ENCODE measurements at regions of chr3 and their contacts with region 1.

Region 1: DNA sequence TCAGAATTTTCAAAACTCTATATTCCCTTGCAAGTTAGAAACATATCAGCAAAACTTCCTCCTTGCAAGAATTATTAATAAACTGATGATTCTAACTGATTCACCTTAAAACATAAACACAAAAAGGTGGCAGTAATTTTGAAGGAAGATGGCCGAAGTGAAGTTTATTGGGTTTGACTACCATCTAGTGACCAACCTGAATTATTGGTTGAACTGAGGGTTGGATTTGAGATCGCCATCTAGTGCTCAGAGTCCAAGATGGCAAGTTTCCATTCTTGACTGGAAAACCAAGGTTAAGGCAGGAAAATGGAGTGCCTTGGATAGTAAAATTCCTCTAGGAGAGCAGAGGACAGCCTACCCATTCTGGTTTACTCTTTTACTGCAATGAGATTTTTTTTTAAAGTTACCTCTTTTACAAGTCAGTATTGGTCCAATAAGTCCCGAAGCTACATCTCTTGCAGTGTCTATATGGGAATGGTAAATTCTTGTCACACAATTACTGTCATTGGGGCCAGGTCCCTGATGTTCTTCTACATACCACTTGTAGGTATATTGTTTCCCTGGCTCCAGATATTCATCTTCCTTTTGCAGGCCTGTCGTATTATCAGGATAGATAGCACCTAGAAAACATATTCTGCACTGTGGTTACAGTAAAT is 51.6 kb upstream of the CP start:
- DNase-seq: peak in 1 of 2 donors; percentile 84
- ATAC-seq: peak; percentile 77 to 86 (median 81)
- H3K4me3 ChIP-seq: no peak overlapping the region
- H3K4me3 Mint-ChIP-seq: no peak overlapping the region
- H3K27ac ChIP-seq: no peak overlapping the region
- H3K27ac Mint-ChIP-seq: no peak overlapping the region
- H3K4me1 ChIP-seq: peaks cover 6% of the 10 kb centered on the region
- H3K4me1 Mint-ChIP-seq: peaks cover 14 to 22% of the 10 kb centered on the region in 2 donors
- H3K27me3 ChIP-seq: no peaks in the 10 kb centered on the region
- H3K27me3 Mint-ChIP-seq: peaks cover 0 to 3% of the 10 kb centered on the region in 2 donors
- CTCF ChIP-seq: peak; percentile 98

Region 2: DNA sequence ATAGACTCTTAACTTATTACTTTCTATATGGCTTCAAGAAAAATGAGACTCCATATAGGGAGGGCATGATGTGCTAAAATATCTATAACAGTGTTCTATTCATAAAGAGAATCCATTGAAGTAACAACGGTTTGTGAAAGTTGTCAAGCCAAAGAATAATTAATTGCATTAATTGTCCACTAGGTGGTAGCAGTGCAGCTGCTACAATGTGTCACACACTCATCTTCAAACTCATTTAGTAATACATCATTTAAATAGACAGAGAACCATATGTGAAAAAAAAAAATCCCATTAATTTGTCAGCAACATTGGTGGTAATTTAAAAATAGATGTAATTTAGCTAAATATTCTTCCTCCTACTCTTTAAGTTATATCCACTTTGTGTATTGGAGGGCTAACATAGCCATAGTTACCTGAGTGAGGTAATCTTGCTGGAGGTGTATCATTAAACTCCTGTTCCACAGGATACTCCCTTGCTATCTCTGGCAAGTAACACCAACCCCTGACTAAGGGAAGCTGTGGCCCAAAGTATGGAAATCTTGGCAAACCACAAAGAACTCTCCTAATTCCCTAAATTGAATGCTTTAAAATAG is 411.9 kb before region 1 on chr3:
- intact Hi-C with region 1: loop called (anchors 1 kb)
- DNase-seq: peak in 1 of 2 donors; percentile 60
- ATAC-seq: peak; percentile 60 to 67 (median 64)
- H3K4me3 ChIP-seq: no peak overlapping the region
- H3K4me3 Mint-ChIP-seq: no peak overlapping the region
- H3K27ac ChIP-seq: no peak overlapping the region
- H3K27ac Mint-ChIP-seq: no peak overlapping the region
- H3K4me1 ChIP-seq: no peaks in the 10 kb centered on the region
- H3K4me1 Mint-ChIP-seq: no peaks in the 10 kb centered on the region
- H3K27me3 ChIP-seq: no peaks in the 10 kb centered on the region
- H3K27me3 Mint-ChIP-seq: peaks cover 12 to 17% of the 10 kb centered on the region in 2 donors
- CTCF ChIP-seq: peak; percentile 66

Region 3: DNA sequence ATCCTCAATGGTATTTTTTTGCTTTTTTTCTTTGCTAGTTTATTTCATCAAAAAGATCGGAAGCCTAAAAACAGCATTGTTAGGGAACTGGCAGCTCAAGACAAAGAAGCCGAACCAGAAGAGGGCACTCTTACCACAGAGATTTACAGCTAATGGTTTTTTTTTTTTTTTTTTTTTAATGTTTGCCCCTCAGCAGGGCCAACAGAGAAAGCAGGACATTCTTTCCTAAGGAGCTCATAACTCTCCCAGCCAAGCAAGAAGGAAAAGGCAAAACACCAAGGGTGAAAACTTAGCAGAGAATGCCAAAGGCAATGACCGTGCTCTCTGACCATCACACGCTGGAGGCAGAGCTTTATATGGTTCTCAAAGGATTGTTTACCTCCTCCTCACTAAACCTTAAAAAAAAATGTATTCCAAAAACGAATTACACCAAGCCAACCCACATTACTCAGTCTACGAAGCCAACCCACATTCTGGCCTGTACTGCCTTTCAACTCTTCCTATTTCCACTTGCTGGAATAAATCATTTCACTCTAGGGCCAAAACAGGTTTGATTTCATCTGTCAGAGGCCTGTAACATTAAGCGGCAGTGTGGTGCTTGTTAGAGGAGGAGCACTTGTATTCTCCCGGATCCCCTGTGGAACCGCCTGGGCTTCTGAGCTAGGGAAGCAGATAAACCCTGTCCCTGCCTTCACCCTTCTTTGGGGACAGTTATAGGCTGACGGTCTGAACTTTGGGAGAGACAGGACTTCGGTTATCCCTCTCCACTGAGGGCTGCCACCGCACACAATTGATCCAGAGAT is 317.5 kb before region 1 on chr3:
- intact Hi-C with region 1: loop called (anchors 1 kb)
- DNase-seq: peak in 1 of 2 donors; percentile 67
- ATAC-seq: peak in 2 of 3 donors; percentile 64 to 65
- H3K4me3 ChIP-seq: no peak overlapping the region
- H3K4me3 Mint-ChIP-seq: no peak overlapping the region
- H3K27ac ChIP-seq: no peak overlapping the region
- H3K27ac Mint-ChIP-seq: no peak overlapping the region
- H3K4me1 ChIP-seq: no peaks in the 10 kb centered on the region
- H3K4me1 Mint-ChIP-seq: peaks cover 6% of the 10 kb centered on the region in 2 donors
- H3K27me3 ChIP-seq: no peaks in the 10 kb centered on the region
- H3K27me3 Mint-ChIP-seq: no peaks in the 10 kb centered on the region
- CTCF ChIP-seq: peak; percentile 62

Region 4: DNA sequence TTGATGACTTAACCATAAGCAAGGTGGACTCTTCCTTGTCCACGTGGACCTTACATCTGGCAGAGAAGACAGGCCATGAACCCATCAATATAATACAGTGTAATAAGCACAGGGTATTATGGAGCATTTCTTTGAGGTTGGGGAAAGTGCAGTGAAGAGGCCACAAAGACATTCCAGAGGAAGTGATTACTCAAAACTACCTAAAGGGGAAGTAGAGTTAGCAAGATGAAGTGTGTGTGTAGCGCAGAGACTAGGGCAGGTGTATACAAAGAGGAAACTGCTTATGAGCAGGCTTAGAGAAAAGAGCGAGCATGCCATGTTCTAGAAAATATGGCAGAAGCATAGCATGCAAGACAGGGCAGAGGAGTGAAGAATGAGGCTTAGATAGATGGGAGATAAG is 69.5 kb before region 1 on chr3:
- intact Hi-C with region 1: no loop called
- DNase-seq: no peak
- ATAC-seq: peak in 2 of 3 donors; percentile 22 to 69
- H3K4me3 ChIP-seq: no peak overlapping the region
- H3K4me3 Mint-ChIP-seq: no peak overlapping the region
- H3K27ac ChIP-seq: no peak overlapping the region
- H3K27ac Mint-ChIP-seq: no peak overlapping the region
- H3K4me1 ChIP-seq: no peaks in the 10 kb centered on the region
- H3K4me1 Mint-ChIP-seq: no peaks in the 10 kb centered on the region
- H3K27me3 ChIP-seq: peaks cover 4% of the 10 kb centered on the region
- H3K27me3 Mint-ChIP-seq: peaks cover 7 to 13% of the 10 kb centered on the region in 2 donors
- CTCF ChIP-seq: no peak

Region 5: GRCh38 chr3:149258298-149258697 is 14.9 kb before region 1 on chr3:
- intact Hi-C with region 1: no loop called
- DNase-seq: no peak
- ATAC-seq: no peak
- H3K4me3 ChIP-seq: no peak overlapping the region
- H3K4me3 Mint-ChIP-seq: no peak overlapping the region
- H3K27ac ChIP-seq: no peak overlapping the region
- H3K27ac Mint-ChIP-seq: no peak overlapping the region
- H3K4me1 ChIP-seq: no peaks in the 10 kb centered on the region
- H3K4me1 Mint-ChIP-seq: no peaks in the 10 kb centered on the region
- H3K27me3 ChIP-seq: no peaks in the 10 kb centered on the region
- H3K27me3 Mint-ChIP-seq: peaks cover 0 to 5% of the 10 kb centered on the region in 2 donors
- CTCF ChIP-seq: no peak

Measured in natural killer cell (primary cell).